ENCODE measurements at regions of chr12 and their contacts with region 1.

Region 1: GRCh38 chr12:114662512-114663177 is 21.3 kb downstream of the TBX3 start:
- DNase-seq: peak; percentile 75
- H3K4me3 Mint-ChIP-seq: no peak overlapping the region
- H3K27ac Mint-ChIP-seq: no peak overlapping the region
- H3K4me1 Mint-ChIP-seq: peaks cover 2% of the 10 kb centered on the region
- H3K27me3 Mint-ChIP-seq: peaks cover 44% of the 10 kb centered on the region

Region 2: DNA sequence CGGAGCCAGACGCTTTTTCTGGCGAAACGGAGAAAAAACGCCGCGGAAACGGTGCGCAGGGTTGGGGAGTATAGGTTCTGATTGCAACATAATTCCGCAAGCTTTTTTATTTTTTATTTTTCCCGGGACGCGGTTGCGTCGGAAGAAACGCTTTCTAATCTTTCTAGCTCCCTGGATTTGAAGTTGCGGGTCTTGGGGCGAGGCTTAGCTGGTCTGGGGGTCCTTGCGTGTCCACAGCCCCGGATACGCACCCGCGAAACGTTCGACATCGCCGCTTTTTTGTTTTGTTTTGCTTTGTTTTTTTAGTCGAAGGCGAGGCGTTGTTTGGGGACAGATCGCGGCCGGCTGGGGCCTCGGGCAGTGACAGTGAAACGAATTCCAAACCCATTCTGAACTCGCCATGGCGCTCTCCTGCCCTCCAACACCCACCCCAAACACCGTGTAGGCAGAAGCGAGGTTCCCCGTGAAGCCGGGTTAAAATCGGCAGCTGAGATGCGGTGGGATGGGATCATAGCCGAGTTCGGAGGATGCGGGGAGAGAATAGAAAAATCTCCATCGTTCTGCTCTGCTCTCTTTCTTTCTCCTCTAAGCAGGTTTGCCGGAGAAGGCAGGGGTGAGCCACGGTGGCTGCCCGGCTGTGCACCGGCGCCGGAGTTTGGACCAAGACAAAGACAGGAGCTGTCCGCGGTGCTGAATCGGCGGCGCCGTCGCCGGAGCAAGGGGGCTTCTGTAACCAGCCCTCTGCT is 1182.9 kb before region 1 on chr12:
- CTCF ChIA-PET with region 1: no interaction called
- POLR2A ChIA-PET with region 1: no interaction called
- intact Hi-C with region 1: loop called (anchors 10 kb)
- DNase-seq: peak; percentile 44
- H3K4me3 Mint-ChIP-seq: no peak overlapping the region
- H3K27ac Mint-ChIP-seq: peak overlapping the region; percentile 8
- H3K4me1 Mint-ChIP-seq: peaks cover 4% of the 10 kb centered on the region
- H3K27me3 Mint-ChIP-seq: peaks cover 74% of the 10 kb centered on the region

Region 3: DNA sequence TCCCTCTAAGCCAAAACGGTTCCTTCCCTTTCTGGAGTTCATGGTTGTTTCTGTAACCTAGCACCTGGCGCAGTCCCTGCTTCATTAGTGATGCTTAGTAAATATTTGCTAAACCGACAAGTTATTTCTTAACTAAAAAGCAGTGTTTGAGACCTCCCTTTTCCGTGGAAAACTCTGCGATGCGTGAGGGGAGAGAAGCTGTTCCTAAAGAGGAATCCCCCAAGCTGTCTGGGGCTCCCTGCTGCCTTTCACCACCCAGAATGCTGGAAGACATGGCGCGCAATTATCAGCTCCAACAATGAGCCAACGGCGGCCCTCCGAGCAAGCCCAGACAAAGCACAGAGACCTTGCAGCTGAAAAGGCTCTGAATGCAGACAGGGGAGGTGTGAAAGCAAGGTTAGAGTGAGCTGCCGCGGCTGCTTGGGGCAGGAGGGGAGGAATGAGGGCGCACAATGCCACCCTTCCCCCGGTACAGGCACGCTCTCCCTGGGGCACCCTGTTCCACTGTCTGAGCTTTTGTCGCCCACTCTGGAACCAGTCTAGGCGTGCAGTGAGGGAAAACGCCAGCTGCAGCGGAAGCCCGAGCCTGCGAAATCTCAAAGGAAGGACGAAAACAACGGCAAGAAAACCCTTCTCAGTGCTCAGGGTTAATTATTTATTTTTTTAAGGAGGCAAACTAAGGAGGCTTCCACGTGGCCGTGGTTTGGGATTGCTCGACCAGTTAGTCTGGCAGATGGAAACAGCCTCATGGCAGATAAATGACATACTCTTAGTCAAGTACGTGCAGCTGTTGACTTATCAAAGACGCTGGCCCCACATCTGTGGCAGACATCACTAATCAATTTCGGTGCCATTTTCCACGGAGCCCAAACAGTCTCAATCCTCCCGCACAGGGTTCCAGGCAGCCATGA is 762.8 kb before region 1 on chr12:
- CTCF ChIA-PET with region 1: no interaction called
- POLR2A ChIA-PET with region 1: no interaction called
- intact Hi-C with region 1: no loop called
- DNase-seq: no peak
- H3K4me3 Mint-ChIP-seq: no peak overlapping the region
- H3K27ac Mint-ChIP-seq: no peak overlapping the region
- H3K4me1 Mint-ChIP-seq: peaks cover 15% of the 10 kb centered on the region
- H3K27me3 Mint-ChIP-seq: no peaks in the 10 kb centered on the region

Region 4: GRCh38 chr12:114447274-114447716 is 215.3 kb before region 1 on chr12:
- CTCF ChIA-PET with region 1: no interaction called
- POLR2A ChIA-PET with region 1: no interaction called
- intact Hi-C with region 1: loop called (anchors 10 kb)
- DNase-seq: no peak
- H3K4me3 Mint-ChIP-seq: no peak overlapping the region
- H3K27ac Mint-ChIP-seq: no peak overlapping the region
- H3K4me1 Mint-ChIP-seq: no peaks in the 10 kb centered on the region
- H3K27me3 Mint-ChIP-seq: peaks cover 72% of the 10 kb centered on the region

Region 5: DNA sequence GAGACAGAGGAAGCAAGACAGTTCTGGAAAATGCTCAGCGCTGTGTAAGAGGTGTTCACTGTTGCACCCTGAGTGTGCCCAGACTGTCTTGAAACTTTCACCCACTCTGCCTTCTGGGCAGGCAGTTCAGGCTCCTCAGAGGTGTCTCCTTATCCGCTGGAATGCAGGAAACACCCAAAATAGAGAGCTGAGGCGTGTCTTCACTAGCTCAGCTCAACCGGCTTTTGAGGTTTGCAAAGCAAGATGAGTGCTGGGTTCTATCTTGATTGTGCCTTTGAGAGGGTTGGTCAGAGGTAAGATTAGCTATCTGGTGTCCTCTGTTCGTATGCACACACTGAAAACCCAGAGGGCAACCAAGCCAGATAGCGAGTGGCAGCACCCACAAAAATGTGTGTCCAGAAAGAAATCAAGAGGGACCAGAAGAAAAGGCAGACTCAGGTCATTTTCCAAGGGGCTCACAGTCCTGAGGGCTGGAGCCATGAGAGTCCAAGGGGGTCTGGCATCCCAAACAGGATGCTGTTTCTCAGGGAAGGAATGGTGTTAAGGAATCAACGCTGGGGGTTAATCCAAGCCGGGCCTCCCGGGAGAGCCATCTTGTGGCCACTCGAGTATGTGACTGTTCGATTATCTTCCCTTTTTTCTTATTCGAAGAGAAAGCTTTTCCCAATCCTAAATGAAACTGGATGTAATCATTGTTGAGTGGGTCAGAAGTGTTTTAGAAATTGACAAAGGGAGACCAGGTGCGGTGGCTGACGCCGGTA is 25.7 kb before region 1 on chr12:
- CTCF ChIA-PET with region 1: no interaction called
- POLR2A ChIA-PET with region 1: no interaction called
- intact Hi-C with region 1: no loop called
- DNase-seq: no peak
- H3K4me3 Mint-ChIP-seq: no peak overlapping the region
- H3K27ac Mint-ChIP-seq: no peak overlapping the region
- H3K4me1 Mint-ChIP-seq: no peaks in the 10 kb centered on the region
- H3K27me3 Mint-ChIP-seq: no peaks in the 10 kb centered on the region

Region 6: GRCh38 chr12:114729731-114730130 is 67.1 kb after region 1 on chr12:
- CTCF ChIA-PET with region 1: no interaction called
- POLR2A ChIA-PET with region 1: no interaction called
- intact Hi-C with region 1: no loop called
- DNase-seq: no peak
- H3K4me3 Mint-ChIP-seq: no peak overlapping the region
- H3K27ac Mint-ChIP-seq: no peak overlapping the region
- H3K4me1 Mint-ChIP-seq: no peaks in the 10 kb centered on the region
- H3K27me3 Mint-ChIP-seq: peaks cover 6% of the 10 kb centered on the region

Region 7: GRCh38 chr12:115070313-115070712 is 407.7 kb after region 1 on chr12:
- CTCF ChIA-PET with region 1: no interaction called
- POLR2A ChIA-PET with region 1: no interaction called
- intact Hi-C with region 1: no loop called
- DNase-seq: no peak
- H3K4me3 Mint-ChIP-seq: no peak overlapping the region
- H3K27ac Mint-ChIP-seq: no peak overlapping the region
- H3K4me1 Mint-ChIP-seq: no peaks in the 10 kb centered on the region
- H3K27me3 Mint-ChIP-seq: no peaks in the 10 kb centered on the region

Region 8: DNA sequence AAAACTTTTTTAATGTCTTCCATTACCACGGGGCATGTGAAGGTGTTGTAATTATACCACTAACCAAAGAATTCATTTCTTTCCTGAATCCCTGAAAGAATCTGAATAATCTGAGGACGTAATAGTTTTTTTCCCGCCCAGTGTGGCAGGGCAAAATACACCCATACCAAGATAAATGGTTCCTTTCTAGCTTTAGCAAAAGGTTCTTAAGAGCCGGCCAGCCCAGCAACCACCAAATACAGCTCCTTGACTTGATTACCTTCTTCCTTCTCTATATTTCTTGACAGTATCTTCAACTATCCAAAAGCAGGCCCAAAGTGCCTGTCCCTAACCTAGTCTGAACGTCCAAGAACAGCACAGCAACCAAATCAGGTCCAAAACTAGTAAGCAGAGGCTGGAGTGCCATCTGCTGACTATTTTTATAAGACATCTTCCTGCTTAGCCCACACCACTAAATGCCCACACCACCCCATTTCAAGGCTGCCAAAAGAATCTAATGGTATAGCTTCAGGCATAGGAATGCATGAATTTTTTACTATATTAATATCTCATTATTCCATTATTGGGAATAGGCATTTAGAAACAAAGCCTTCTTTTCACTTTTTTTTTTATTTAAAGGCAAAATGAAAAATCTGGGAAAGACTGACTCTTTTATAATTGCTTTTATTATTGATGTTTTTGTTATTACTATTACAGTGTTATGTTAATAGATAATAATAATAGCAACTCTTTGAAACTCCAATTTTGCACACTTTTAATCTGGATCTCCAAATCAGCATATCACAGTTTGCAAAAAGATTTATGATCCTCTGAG is 1090.5 kb after region 1 on chr12:
- CTCF ChIA-PET with region 1: no interaction called
- POLR2A ChIA-PET with region 1: no interaction called
- intact Hi-C with region 1: loop called (anchors 10 kb)
- DNase-seq: no peak
- H3K4me3 Mint-ChIP-seq: no peak overlapping the region
- H3K27ac Mint-ChIP-seq: no peak overlapping the region
- H3K4me1 Mint-ChIP-seq: no peaks in the 10 kb centered on the region
- H3K27me3 Mint-ChIP-seq: peaks cover 5% of the 10 kb centered on the region

Region 9: DNA sequence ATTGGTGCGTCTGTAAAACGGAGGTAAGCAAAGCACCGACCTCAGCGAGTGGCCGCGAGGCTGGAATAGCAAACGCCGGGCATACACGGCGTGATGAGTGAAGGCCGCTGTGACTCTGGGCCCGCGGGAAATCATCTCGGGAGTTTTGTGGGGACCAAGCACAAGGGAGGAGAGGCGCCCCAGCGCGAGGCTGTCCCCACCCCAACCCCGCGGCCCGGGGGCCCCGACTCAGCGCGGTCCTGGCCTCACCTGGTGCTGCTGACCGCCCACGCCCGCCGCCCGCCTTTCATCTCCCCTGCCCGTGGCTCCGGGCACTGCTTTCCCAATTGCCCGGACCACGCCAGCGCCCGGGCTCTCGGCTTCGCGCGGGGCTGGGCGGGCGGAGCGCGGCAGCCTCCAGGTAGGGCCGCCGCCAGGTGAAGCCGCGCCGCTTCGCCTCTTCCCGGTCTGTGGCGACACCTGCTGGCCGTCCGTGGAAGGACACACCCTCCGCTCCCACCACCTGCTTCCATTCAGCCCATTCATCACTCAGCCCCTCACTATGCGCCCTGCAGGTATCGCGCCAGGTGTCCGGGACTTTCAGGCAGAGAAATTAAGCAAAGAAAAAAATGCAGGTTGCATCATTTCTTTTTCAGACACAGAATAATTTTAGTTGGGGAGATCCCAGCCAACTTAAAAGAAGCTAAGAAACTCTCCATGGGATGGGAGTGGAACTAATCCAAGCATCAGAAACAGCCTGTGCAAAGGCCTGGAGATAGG is 1254.4 kb after region 1 on chr12:
- CTCF ChIA-PET with region 1: interaction called, 17 read pairs
- POLR2A ChIA-PET with region 1: no interaction called
- intact Hi-C with region 1: loop called (anchors 1 kb)
- DNase-seq: peak; percentile 78
- H3K4me3 Mint-ChIP-seq: no peak overlapping the region
- H3K27ac Mint-ChIP-seq: no peak overlapping the region
- H3K4me1 Mint-ChIP-seq: no peaks in the 10 kb centered on the region
- H3K27me3 Mint-ChIP-seq: peaks cover 38% of the 10 kb centered on the region